ENCODE measurements at regions of chr5 and their contacts with region 1.

Region 1: GRCh38 chr5:126354012-126354857 is 69.0 kb upstream of the GRAMD2B start:
- DNase-seq: no peak
- ATAC-seq: peak; percentile 71
- H3K4me3 Mint-ChIP-seq: peak overlapping the region; percentile 34
- H3K27ac Mint-ChIP-seq: peak overlapping the region; percentile 55
- H3K4me1 Mint-ChIP-seq: peaks cover 12% of the 10 kb centered on the region
- H3K27me3 Mint-ChIP-seq: no peaks in the 10 kb centered on the region

Region 2: GRCh38 chr5:126339215-126339805 is 14.9 kb before region 1 on chr5:
- CTCF ChIA-PET with region 1: interaction called, 30 read pairs
- POLR2A ChIA-PET with region 1: no interaction called
- intact Hi-C with region 1: no loop called
- DNase-seq: peak; percentile 64
- ATAC-seq: peak; percentile 53
- H3K4me3 Mint-ChIP-seq: no peak overlapping the region
- H3K27ac Mint-ChIP-seq: no peak overlapping the region
- H3K4me1 Mint-ChIP-seq: no peaks in the 10 kb centered on the region
- H3K27me3 Mint-ChIP-seq: peaks cover 6% of the 10 kb centered on the region

Region 3: DNA sequence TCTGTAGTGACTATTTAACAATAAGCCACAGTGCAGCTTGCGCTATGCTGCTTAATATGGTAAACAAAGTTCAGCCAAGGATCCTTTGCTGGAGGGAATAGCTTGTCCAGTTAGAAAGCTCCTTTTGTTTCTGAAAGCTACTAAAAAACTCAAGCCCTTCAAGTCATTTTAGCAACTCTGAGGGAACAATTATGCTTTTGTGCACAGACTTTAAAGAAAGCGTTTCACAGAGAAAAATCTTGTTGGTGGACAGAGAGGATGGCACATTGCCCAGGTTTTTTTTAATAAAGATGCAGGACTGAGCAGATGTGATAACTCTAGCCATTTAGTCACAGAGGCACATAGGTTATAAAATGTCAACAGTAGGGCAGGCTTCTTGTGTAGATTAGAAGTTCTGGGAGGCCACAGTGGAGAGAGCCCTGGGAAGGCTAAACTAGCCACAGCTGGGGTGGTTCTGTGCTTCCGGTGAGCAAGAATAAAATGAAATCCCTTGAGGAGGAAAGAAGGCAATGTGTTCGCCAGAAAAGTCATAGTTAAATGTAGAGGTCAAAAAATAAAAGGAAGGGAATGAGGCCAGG is 177.4 kb after region 1 on chr5:
- CTCF ChIA-PET with region 1: interaction called, 30 read pairs
- POLR2A ChIA-PET with region 1: no interaction called
- intact Hi-C with region 1: no loop called
- DNase-seq: no peak
- ATAC-seq: no peak
- H3K4me3 Mint-ChIP-seq: no peak overlapping the region
- H3K27ac Mint-ChIP-seq: no peak overlapping the region
- H3K4me1 Mint-ChIP-seq: no peaks in the 10 kb centered on the region
- H3K27me3 Mint-ChIP-seq: peaks cover under 1% of the 10 kb centered on the region

Region 4: DNA sequence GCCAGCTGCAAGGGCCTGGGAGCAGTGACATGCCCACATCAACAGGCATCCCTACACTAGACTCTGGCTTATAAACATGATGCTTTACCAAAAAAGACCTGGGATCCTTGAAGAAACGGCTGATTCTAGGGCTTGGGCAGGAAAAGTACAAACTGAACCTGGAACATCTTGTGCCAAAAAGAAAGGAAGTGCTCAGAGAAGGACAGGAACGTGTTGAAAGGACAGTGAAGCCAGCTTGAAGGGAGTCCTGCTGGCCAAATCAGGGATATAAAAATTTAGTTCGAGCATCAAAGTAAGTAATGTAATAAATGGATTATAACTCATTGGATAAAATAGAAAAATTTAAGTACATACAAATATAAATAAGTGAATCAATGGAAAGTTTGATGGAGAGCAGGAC is 182.6 kb after region 1 on chr5:
- CTCF ChIA-PET with region 1: interaction called, 94 read pairs
- POLR2A ChIA-PET with region 1: no interaction called
- intact Hi-C with region 1: loop called (anchors 1 kb)
- DNase-seq: no peak
- ATAC-seq: no peak
- H3K4me3 Mint-ChIP-seq: no peak overlapping the region
- H3K27ac Mint-ChIP-seq: no peak overlapping the region
- H3K4me1 Mint-ChIP-seq: no peaks in the 10 kb centered on the region
- H3K27me3 Mint-ChIP-seq: no peaks in the 10 kb centered on the region

Region 5: GRCh38 chr5:126544087-126544740 is 190.0 kb after region 1 on chr5:
- CTCF ChIA-PET with region 1: interaction called, 94 read pairs
- POLR2A ChIA-PET with region 1: no interaction called
- intact Hi-C with region 1: loop called (anchors 1 kb)
- DNase-seq: peak; percentile 61
- ATAC-seq: no peak
- H3K4me3 Mint-ChIP-seq: no peak overlapping the region
- H3K27ac Mint-ChIP-seq: no peak overlapping the region
- H3K4me1 Mint-ChIP-seq: no peaks in the 10 kb centered on the region
- H3K27me3 Mint-ChIP-seq: no peaks in the 10 kb centered on the region

Region 6: DNA sequence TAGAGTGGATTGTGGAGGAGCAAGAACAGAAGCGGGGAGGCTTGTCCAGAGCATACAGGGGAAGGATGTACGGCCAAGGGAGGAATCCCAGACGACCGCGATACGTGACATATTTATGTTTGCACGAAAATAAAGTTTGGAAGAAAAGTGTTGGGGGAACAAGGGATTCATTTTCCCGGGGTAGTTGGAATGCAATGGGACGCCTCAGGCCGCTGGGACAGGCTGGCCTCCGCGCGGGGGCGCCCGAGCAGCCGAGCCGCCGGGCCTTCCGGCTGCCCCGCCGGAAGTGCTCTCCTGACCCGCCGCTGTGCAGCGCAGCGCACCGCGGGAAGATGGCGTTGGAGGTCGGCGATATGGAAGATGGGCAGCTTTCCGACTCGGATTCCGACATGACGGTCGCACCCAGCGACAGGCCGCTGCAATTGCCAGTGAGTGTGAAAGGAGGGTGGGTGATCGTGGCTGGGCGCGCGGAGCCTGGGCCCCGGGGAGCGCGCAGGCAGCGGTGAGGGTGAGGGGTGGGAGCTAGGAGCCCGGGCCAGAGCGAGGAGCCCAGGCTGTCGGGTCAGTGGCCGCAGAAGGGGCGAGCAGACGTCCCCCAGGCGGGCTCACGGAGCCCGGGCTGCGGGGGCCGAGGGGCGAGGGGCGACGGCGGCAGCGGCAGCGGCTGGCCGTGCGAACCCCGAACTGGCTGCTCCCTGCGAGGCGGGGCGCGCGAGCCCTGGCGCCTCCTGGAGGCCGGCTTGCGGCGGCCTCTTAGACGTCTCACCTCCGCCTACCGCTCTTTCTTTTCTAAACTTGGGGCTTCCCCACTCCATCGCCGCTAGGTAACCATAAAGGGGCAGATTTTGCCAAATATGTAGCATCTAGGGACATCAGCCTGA is 246.6 kb after region 1 on chr5 and contains the start of gene PHAX:
- CTCF ChIA-PET with region 1: interaction called, 5 read pairs
- POLR2A ChIA-PET with region 1: no interaction called
- intact Hi-C with region 1: loop called (anchors 2 kb)
- DNase-seq: peak; percentile 87
- ATAC-seq: peak; percentile 94
- H3K4me3 Mint-ChIP-seq: peak within 1 kb of the TSS; percentile 97
- H3K27ac Mint-ChIP-seq: peak within 1 kb of the TSS; percentile 99
- H3K4me1 Mint-ChIP-seq: peaks cover 38% of the 10 kb centered on the region
- H3K27me3 Mint-ChIP-seq: no peaks in the 10 kb centered on the region
- total RNA-seq, gene PHAX: 41.4 to 49.1 TPM